Spleen (tissue), 13 donors: ENCODE measurements at regions of chr2 and their contacts with region 1.

Region 1: DNA sequence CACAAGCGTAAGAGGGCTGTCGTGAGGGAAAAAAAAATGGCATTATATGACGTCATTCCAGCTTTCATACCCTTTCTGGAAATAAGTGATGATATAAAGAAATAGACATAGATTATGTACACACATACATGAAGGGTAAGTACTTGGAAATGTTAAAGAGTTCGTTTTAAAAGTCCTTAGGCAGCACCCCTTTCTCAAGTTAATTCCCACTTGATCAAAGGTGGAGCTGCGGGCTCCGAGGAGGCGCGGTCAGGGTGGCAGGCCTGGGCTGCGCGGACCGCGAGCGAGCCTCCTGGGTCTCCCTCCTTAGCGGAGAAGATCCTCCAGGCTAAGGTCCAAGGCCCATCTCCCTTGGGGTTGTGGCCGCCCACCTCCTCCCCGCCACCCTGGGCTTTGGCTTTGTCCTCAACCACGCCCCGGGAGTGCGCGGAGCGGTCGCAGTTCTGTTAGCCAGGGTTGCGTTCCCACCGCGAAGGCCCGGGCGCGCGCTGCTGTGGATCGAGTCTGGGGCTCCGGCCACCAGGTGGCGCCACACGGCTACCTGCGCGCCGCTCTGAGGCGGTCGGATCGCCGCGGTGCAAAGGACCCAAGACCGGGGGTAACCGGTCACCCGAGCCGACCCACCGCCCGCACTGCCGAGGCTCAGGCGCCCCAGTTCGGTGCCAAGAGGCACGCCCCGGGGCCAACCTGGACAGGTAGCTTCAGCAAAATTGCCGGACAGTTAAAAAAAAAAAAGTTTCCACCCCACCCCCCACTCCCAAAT is 66.8 kb downstream of the HNRNPLL start:
- DNase-seq: peak; percentile 96
- H3K4me3 ChIP-seq: peak overlapping the region; percentile 27 to 66 (median 36)
- H3K27ac ChIP-seq: no peak overlapping the region
- H3K4me1 ChIP-seq: peaks cover 0 to 32% (median 24%) of the 10 kb centered on the region in 6 donors
- H3K27me3 ChIP-seq: peaks cover 0 to 16% (median 0%) of the 10 kb centered on the region in 7 donors
- CTCF ChIP-seq: peak; percentile 69 to 96 (median 87)
- POLR2A ChIP-seq: no peak

Region 2: DNA sequence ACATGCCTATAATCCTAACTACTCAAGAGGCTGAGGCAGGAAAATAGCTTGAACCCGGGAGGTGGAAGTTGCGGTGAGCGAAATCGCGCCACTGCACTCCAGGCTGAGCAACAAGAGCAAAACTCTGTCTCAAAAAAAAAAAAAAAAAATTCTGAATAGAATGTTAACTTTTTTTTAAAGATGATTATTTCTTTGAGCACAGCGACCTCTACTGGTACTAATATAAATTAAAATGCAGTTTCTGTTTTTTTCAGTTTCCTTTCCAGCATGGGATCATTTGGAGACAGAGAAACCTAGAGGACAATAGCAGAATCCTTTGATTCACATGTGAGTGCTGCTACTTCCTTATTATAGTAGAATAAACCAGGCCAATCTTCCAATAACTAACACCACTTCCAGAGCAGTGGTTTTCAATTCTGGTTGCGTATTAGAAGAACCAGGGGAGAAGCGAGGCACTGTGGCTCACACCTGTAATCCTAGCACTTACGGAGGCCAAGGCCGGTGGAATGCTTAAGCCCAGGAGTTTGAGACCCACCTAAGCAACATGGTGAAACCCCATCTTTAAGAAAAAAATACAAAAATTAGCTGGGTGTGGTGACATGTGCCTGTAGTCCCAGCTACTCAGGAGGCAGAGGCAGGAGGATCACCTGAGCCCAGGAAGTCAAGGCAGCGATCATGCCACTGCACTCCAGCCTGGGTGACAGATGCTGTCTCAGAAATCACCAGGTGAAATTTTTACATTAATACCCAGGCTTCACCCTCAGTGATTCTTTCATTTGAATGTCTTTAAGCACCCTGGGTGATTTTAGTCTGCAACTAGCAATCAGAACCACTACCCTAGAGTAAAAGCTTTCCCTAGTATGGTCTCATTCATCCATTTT is 205.2 kb after region 1 on chr2:
- intact Hi-C with region 1: loop called (anchors 5 kb)
- DNase-seq: no peak
- H3K4me3 ChIP-seq: no peak overlapping the region
- H3K27ac ChIP-seq: peak overlapping the region in 4 of 8 donors; percentile 16 to 68 (median 38)
- H3K4me1 ChIP-seq: peaks cover 9 to 77% (median 45%) of the 10 kb centered on the region in 6 donors
- H3K27me3 ChIP-seq: no peaks in the 10 kb centered on the region
- CTCF ChIP-seq: peak; percentile 50 to 75 (median 67)
- POLR2A ChIP-seq: no peak